GM12878 (cell line): ENCODE measurements at regions of chr2 and their contacts with region 1.

Region 1: DNA sequence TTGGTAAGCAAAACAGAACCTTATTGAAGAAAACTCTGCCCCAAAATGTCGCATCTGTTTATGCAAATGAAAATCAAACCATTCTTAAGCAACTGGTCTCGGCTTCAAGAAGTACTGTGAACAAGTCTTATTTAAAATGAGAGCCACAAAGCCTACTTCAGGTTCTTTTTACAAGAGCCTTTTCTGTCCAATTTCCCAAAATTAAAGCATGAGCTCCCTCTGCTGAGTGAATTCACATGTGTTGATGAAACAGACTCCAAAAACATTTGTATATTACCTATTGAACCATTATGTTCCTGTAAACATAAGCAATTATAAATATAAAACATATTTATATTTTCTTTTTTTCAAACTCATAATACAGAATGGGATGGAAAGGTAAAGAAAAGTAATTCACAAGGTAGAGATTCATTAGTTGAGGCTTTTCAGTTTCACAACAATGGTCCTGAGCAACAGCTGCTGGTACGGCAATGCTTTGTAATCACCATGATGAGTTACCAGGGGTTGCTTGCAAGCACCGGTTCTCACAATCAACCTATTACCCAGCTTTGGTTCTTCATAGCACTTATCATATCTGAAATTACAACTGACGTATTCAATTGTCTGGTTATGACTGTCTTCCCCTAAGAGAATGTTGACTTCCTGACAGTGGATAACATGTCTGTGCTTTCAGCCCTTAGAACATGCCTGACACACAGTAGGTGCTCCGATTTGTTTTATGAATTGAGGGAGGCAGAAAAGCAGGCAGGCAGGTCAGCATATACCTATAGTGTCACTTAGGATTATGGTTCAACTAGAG is 108.4 kb upstream of the BZW1 start:
- DNase-seq: peak; percentile 4
- ATAC-seq: peak; percentile 80
- H3K4me3 ChIP-seq: no peak overlapping the region
- H3K27ac ChIP-seq: no peak overlapping the region
- H3K4me1 ChIP-seq: no peaks in the 10 kb centered on the region
- H3K27me3 ChIP-seq: peaks cover 0 to 2% of the 10 kb centered on the region in 2 experiments; a peak in 1 of 4 replicates
- CTCF ChIP-seq: peak; percentile 22 to 66 (median 41); a peak in 4 of 6 replicates
- EP300 ChIP-seq: no peak
- POLR2A ChIP-seq: no peak
- RAD21 ChIP-seq: peak; percentile 85

Region 2: DNA sequence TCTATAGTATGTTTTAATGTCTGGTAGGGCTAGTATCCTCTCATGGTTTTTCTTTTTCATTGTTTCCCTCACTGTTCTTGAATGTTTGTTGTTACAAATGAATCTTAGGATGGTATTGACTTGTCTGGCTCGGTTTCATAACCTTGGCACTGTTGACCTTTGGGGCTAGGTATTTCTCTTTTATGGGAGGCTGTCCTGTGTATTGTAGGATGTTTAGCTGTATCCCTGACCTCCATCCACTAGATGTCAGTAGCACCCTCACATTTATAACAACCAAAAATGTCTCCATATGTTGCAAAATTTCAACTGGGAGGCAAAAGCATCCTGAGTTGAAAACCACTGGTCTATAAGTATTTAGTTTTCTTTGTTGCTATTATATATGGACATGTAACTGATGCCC is 124.5 kb before region 1 on chr2:
- CTCF ChIA-PET with region 1: interaction called, 14 read pairs
- POLR2A ChIA-PET with region 1: no interaction called
- RAD21 ChIA-PET with region 1: interaction called, 16 read pairs
- SMC1A ChIA-PET with region 1: interaction called, 13 read pairs
- in situ Hi-C with region 1: no loop called
- intact Hi-C with region 1: loop called (anchors 5 kb)
- DNase-seq: peak; percentile 5
- ATAC-seq: peak; percentile 87
- H3K4me3 ChIP-seq: no peak overlapping the region
- H3K27ac ChIP-seq: no peak overlapping the region
- H3K4me1 ChIP-seq: no peaks in the 10 kb centered on the region
- H3K27me3 ChIP-seq: no peaks in the 10 kb centered on the region
- CTCF ChIP-seq: peak; percentile 31 to 46 (median 45); a peak in 5 of 6 replicates
- EP300 ChIP-seq: no peak
- POLR2A ChIP-seq: no peak
- RAD21 ChIP-seq: peak; percentile 63

Region 3: DNA sequence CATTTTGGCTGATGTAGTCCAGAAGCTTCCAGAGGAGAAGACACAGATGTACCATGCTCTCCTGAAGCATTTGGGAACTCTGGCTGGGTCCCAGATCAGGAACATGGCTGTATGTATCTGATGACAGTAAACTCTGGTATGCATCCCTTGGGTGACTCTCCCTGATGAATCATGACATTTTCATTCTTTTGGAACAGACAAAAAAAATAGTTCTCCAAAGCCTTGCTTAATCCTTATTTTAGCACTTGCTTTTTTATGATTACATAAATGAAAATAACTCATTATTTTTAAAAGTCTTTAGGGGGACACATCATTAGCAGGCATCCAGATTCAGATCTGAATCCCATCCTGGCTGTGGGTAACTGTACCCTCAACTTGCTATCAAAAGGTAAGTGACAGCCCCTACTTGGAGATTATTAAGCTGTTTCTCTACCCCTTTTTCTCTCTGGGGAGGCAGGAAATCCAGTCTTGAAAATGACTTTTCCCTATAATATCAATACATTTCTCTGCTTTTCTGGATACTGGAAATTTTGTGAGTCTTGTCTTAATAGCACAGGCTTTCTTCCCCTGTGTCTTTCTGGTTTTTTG is 94.2 kb before region 1 on chr2:
- CTCF ChIA-PET with region 1: no interaction called
- POLR2A ChIA-PET with region 1: no interaction called
- RAD21 ChIA-PET with region 1: no interaction called
- SMC1A ChIA-PET with region 1: no interaction called
- in situ Hi-C with region 1: no loop called
- intact Hi-C with region 1: no loop called
- DNase-seq: no peak
- ATAC-seq: no peak
- H3K4me3 ChIP-seq: no peak overlapping the region
- H3K27ac ChIP-seq: no peak overlapping the region
- H3K4me1 ChIP-seq: no peaks in the 10 kb centered on the region
- H3K27me3 ChIP-seq: no peaks in the 10 kb centered on the region
- CTCF ChIP-seq: no peak
- EP300 ChIP-seq: no peak
- POLR2A ChIP-seq: no peak
- RAD21 ChIP-seq: no peak

Region 4: DNA sequence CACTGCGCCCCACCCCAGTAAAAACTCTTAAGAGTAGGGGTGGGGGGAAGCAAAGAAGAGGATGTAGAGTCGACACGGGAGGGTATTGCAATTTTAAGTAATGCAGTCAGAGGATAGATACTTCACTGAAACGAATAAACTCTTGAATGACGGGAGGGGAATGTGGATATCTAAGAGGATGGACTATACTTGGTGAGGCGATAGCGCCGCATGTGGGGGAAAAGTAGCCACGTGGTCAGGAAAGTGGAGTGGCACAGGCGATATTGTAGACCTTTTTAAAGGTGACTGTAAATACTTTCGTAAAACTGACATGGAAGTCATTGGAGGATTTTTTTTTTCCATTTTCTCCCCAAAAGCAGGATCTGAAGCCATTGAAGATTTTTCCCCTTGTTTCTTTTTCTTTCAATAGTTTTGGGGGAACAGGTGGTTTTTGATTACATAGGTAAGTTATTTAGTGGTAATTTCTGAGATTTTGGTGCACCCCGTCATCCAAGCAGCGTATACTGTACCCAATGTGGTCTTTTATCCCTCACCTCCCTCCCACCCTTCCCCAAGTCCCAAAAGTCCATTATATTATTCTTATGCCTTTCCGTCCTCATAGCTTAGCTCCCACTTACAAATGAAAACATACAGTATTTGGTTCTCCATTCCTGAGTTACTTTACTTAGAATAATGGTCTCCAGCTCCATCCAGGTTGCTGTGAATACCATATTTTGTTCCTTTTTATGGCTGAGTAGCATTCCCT is 147.4 kb after region 1 on chr2:
- CTCF ChIA-PET with region 1: no interaction called
- POLR2A ChIA-PET with region 1: no interaction called
- RAD21 ChIA-PET with region 1: no interaction called
- SMC1A ChIA-PET with region 1: no interaction called
- in situ Hi-C with region 1: no loop called
- intact Hi-C with region 1: no loop called
- DNase-seq: no peak
- ATAC-seq: peak; percentile 11; the same call in 2 of the 3 replicates
- H3K4me3 ChIP-seq: no peak overlapping the region
- H3K27ac ChIP-seq: no peak overlapping the region
- H3K4me1 ChIP-seq: no peaks in the 10 kb centered on the region
- H3K27me3 ChIP-seq: no peaks in the 10 kb centered on the region
- CTCF ChIP-seq: no peak
- EP300 ChIP-seq: no peak
- POLR2A ChIP-seq: no peak; the same call in 1 of the 2 replicates
- RAD21 ChIP-seq: no peak